Activated CD4-positive, alpha-beta T cell treated with anti-CD3 and anti-CD28 coated beads for 36 hours (primary cell): ENCODE measurements at regions of chr9 and their contacts with region 1.

Region 1: DNA sequence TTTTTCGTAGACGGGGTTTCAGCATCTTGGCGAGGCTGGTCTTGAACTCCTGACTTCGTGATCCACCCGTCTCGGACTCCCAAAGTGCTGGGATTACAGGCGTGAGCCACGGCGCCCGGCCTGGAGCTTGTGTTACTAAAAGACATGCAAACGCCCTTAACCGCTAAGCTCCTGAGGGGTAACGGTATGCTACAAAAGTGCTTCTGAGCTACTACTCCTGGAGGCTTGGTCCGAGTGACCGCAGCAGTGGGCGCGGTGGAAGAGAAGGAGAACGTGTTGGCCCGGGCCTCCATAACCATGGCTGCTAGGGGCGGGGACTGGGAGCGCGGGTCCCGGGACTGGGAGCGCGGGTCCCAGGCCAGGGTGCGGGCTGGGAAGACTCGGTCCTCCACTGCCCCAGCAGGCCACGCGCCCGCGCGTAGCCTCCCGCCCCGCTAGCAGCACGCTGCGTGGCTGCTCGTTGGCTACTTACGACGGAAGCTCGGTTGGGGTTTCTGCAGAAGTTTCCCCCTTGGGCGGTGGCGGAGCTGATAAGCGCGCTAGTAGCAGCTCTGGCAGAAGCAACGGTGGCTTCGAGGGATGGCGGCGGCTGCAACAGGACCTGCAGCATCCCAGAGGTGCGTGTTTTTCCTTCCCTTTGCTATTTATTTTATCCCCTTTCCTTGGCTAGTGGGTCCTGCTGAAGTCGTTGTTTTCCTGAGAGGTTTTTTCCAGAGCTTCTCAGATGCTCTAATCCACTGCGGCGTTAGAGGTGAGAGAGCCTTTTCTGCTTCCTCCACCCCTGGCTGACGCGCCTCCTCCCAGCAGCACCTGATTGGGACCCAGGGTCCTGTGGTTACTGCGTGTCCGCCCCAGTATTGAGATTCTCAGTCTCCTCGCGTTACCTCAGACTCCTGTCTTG is 69.3 kb upstream of the CCDC180 start:
- DNase-seq: peak; percentile 91
- ATAC-seq: peak; percentile 95
- H3K4me3 Mint-ChIP-seq: peak overlapping the region; percentile 93
- H3K27ac Mint-ChIP-seq: peak overlapping the region; percentile 97
- H3K4me1 Mint-ChIP-seq: peaks cover 12% of the 10 kb centered on the region
- H3K27me3 Mint-ChIP-seq: no peaks in the 10 kb centered on the region

Region 2: GRCh38 chr9:96009690-96010472 is 1228.3 kb before region 1 on chr9:
- CTCF ChIA-PET with region 1: no interaction called
- POLR2A ChIA-PET with region 1: no interaction called
- intact Hi-C with region 1: no loop called
- DNase-seq: peak; percentile 75
- ATAC-seq: peak; percentile 77
- H3K4me3 Mint-ChIP-seq: no peak overlapping the region
- H3K27ac Mint-ChIP-seq: peak overlapping the region; percentile 76
- H3K4me1 Mint-ChIP-seq: peaks cover 21% of the 10 kb centered on the region
- H3K27me3 Mint-ChIP-seq: no peaks in the 10 kb centered on the region

Region 3: GRCh38 chr9:96686548-96687335 is 551.5 kb before region 1 on chr9:
- CTCF ChIA-PET with region 1: no interaction called
- POLR2A ChIA-PET with region 1: no interaction called
- intact Hi-C with region 1: loop called in 1 of 2 experiments (anchors 1 kb)
- DNase-seq: peak; percentile 85
- ATAC-seq: peak; percentile 97
- H3K4me3 Mint-ChIP-seq: peak overlapping the region; percentile 76
- H3K27ac Mint-ChIP-seq: peak overlapping the region; percentile 68
- H3K4me1 Mint-ChIP-seq: peaks cover 7% of the 10 kb centered on the region
- H3K27me3 Mint-ChIP-seq: peaks cover 15% of the 10 kb centered on the region

Region 4: GRCh38 chr9:96777426-96777864 is 460.8 kb before region 1 on chr9:
- CTCF ChIA-PET with region 1: no interaction called
- POLR2A ChIA-PET with region 1: no interaction called
- intact Hi-C with region 1: loop called in 1 of 2 experiments (anchors 5 kb)
- DNase-seq: no peak
- ATAC-seq: no peak
- H3K4me3 Mint-ChIP-seq: peak overlapping the region; percentile 93
- H3K27ac Mint-ChIP-seq: peak overlapping the region; percentile 95
- H3K4me1 Mint-ChIP-seq: peaks cover 24% of the 10 kb centered on the region
- H3K27me3 Mint-ChIP-seq: no peaks in the 10 kb centered on the region

Region 5: GRCh38 chr9:96875461-96876364 is 362.5 kb before region 1 on chr9:
- CTCF ChIA-PET with region 1: no interaction called
- POLR2A ChIA-PET with region 1: no interaction called
- intact Hi-C with region 1: loop called in 1 of 2 experiments (anchors 5 kb)
- DNase-seq: peak; percentile 73
- ATAC-seq: peak; percentile 67
- H3K4me3 Mint-ChIP-seq: peak overlapping the region; percentile 76
- H3K27ac Mint-ChIP-seq: peak overlapping the region; percentile 87
- H3K4me1 Mint-ChIP-seq: peaks cover 26% of the 10 kb centered on the region
- H3K27me3 Mint-ChIP-seq: peaks cover 44% of the 10 kb centered on the region

Region 6: DNA sequence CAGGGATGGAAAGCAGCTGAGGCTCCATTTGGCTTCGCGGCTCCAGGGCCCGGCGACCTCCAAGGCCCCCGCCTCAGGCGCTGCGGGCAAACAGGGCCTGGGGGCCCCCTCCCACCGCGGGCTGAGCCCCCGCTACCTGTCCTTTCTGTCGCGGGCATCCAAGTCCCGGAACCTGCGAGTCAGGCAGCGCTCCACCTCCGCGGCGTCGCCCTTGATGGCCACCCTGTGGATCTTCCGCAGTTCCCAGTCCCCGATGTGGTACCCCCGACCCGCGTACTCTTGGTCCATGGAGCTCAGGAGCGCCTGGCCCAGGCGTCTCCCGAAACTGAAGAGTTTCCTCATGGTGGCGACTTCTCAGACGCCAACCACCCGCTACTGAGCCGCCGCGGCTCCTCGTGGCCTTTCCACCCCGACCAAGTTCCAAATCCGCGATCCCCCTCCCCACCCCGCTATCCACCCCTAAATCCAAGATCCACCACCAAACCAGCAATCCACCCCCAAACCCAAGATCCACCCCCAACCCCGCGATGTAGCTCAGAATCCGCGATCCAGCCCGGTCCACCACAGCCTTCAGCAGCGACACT is 17.2 kb before region 1 on chr9:
- CTCF ChIA-PET with region 1: no interaction called
- POLR2A ChIA-PET with region 1: no interaction called
- intact Hi-C with region 1: loop called in 1 of 2 experiments (anchors 1 kb)
- DNase-seq: no peak
- ATAC-seq: peak; percentile 37
- H3K4me3 Mint-ChIP-seq: peak overlapping the region; percentile 66
- H3K27ac Mint-ChIP-seq: peak overlapping the region; percentile 6
- H3K4me1 Mint-ChIP-seq: peaks cover 5% of the 10 kb centered on the region
- H3K27me3 Mint-ChIP-seq: peaks cover 35% of the 10 kb centered on the region

Region 7: GRCh38 chr9:97307091-97307490 is 68.9 kb after region 1 on chr9:
- CTCF ChIA-PET with region 1: no interaction called
- POLR2A ChIA-PET with region 1: no interaction called
- intact Hi-C with region 1: no loop called
- DNase-seq: peak; percentile 67
- ATAC-seq: peak; percentile 55
- H3K4me3 Mint-ChIP-seq: no peak overlapping the region
- H3K27ac Mint-ChIP-seq: no peak overlapping the region
- H3K4me1 Mint-ChIP-seq: no peaks in the 10 kb centered on the region
- H3K27me3 Mint-ChIP-seq: peaks cover 11% of the 10 kb centered on the region